HEK293T (cell line): ENCODE measurements at regions of chr19 and their contacts with region 1.

Region 1: DNA sequence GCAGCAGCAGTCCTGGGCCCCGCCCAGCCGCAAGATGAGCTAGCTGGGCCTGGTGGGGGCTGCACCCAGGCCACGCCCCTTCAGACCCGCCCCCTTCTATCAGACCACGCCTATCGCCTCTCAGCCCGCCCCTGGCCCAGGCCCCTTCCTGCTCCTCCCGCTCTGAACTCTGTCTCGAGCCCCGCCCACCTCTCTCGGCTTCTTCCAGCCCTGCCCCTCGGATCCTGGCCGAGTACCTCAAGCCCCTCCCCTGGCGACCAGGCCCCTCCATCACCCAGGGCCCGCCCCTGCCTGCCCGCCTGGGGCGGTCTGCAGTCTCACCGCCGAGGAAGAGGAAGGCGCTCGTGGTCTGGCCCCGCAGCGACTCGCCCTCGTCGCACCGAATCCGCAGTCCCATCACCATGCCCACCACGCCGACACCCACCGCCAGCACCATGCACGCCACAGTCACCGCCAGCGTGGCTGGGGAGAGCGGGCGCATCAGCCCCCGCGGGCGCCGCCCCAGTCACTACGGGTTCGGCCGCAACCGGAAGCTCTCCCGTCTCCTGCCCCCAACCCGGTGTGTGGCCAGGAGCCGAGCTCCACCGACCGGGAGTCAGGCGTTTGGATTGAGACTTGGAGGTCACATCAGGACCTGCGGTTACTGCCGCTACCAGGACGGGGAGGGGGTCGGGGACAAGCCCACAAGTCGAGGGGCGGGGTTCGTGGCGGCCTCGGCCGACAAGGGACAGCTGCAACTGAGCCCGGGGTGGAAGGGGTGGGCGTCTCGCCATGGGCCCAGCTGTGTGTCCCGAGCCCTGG is 1.0 kb downstream of the CLDND2 start:
- DNase-seq: peak; percentile 96

Region 2: GRCh38 chr19:51338563-51339312 is 29.0 kb before region 1 on chr19:
- CTCF ChIA-PET with region 1: interaction called, 6 read pairs
- POLR2A ChIA-PET with region 1: interaction called, 40 read pairs
- DNase-seq: peak; percentile 82